ENCODE measurements at regions of chr11 and their contacts with region 1.

Region 1: GRCh38 chr11:86244522-86245368 is at the start of gene EED:
- DNase-seq: peak; percentile 90
- ATAC-seq: peak; percentile 87
- H3K4me3 Mint-ChIP-seq: no peak within 1 kb of the TSS
- H3K27ac Mint-ChIP-seq: no peak within 1 kb of the TSS
- H3K4me1 Mint-ChIP-seq: peaks cover 31% of the 10 kb centered on the region
- H3K27me3 Mint-ChIP-seq: no peaks in the 10 kb centered on the region
- CTCF ChIP-seq: no peak
- total RNA-seq, gene EED: 55.2 and 63.7 TPM in 2 replicates

Region 2: DNA sequence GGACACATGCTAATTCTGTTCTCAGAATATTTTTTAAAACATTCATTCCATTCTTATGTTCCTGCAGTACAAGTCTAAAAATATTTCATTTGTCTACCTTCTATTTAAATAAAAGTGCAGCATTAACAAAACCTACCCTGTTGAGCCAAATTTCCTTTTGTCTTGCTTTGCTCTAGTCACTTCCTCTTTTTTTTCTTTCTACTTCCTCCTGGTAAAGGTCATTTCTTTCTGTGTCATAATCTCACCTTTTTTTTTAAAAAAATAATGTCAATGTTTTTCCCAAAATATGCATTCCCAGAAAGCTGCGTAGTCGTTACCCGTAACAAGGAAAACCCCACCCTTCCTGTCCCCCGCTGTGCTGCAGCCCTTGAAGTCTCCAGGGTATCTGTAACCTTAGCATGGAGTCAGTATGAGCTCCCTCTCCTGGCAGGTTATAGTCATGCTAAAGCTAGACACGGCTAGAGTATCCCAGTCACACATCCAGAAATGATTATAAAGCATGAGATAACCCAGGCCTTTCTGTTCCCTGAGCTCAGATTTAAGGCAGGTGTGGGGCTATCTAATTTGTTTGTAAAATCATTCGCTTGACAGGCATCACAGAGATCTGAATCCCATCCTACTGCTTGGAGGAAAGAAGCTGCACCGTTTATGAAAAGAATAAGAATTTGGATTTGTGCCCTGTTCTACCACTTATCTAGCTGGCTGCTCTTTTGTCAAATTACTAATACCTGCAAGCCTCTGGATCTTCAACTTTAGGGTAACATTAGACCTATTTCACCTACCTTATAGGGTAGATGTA is 51.2 kb before region 1 on chr11:
- CTCF ChIA-PET with region 1: interaction called, 8 read pairs
- POLR2A ChIA-PET with region 1: interaction called, 8 read pairs
- intact Hi-C with region 1: loop called (anchors 1 kb)
- DNase-seq: peak; percentile 48
- ATAC-seq: peak; percentile 96
- H3K4me3 Mint-ChIP-seq: peak overlapping the region; percentile 76
- H3K27ac Mint-ChIP-seq: peak overlapping the region; percentile 92
- H3K4me1 Mint-ChIP-seq: peaks cover 30% of the 10 kb centered on the region
- H3K27me3 Mint-ChIP-seq: no peaks in the 10 kb centered on the region
- CTCF ChIP-seq: peak; percentile 50

Region 3: GRCh38 chr11:86218125-86219084 is 26.3 kb before region 1 on chr11:
- CTCF ChIA-PET with region 1: interaction called, 6 read pairs
- POLR2A ChIA-PET with region 1: interaction called, 59 read pairs
- intact Hi-C with region 1: loop called (anchors 1 kb)
- DNase-seq: no peak
- ATAC-seq: peak; percentile 22
- H3K4me3 Mint-ChIP-seq: peak overlapping the region; percentile 69
- H3K27ac Mint-ChIP-seq: peak overlapping the region; percentile 94
- H3K4me1 Mint-ChIP-seq: peaks cover 48% of the 10 kb centered on the region
- H3K27me3 Mint-ChIP-seq: no peaks in the 10 kb centered on the region
- CTCF ChIP-seq: peak; percentile 32

Region 4: DNA sequence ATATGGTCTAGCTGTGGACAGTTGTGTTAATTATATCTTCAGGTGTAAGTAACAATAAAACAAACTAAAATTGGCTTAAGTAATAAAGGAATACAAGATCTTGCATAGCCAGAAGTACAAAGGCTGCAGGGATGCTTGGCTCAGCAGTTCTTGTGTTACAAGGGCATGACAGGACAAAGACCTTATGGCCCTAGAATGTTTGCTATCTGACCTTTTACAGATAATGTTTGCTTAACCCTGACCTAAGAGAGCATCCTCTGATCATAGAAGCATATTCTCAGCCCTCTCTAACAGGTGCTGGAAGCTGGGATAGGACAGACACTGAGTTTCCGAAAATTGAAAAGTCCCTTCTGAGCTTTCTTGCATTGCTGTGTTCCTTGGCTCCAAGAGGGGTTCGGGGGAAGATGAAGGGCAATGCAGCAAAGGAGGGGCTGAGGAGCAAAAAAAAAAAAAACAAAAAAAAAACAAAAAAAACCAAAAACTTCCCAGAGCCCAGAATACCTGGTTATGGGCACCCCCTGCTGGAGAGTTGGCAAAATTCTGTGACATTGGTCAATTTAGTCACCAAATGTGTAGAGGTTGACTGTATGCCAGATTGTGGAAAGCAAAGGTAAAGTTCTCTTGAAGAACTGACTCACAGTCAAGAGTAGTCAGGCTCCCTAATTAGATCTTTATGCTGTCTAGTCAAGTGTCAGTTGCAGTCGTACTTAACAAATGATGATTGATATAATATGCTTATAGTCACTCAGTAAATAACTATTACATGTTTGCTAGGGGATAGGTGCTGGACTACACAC is 46.9 kb after region 1 on chr11:
- CTCF ChIA-PET with region 1: interaction called, 4 read pairs
- POLR2A ChIA-PET with region 1: interaction called, 11 read pairs
- intact Hi-C with region 1: loop called (anchors 1 kb)
- DNase-seq: no peak
- ATAC-seq: peak; percentile 44
- H3K4me3 Mint-ChIP-seq: no peak overlapping the region
- H3K27ac Mint-ChIP-seq: no peak overlapping the region
- H3K4me1 Mint-ChIP-seq: peaks cover 35% of the 10 kb centered on the region
- H3K27me3 Mint-ChIP-seq: no peaks in the 10 kb centered on the region
- CTCF ChIP-seq: peak; percentile 34

Region 5: GRCh38 chr11:86497181-86497701 is 252.5 kb after region 1 on chr11:
- CTCF ChIA-PET with region 1: no interaction called
- POLR2A ChIA-PET with region 1: no interaction called
- intact Hi-C with region 1: no loop called
- DNase-seq: no peak
- ATAC-seq: no peak
- H3K4me3 Mint-ChIP-seq: no peak overlapping the region
- H3K27ac Mint-ChIP-seq: no peak overlapping the region
- H3K4me1 Mint-ChIP-seq: no peaks in the 10 kb centered on the region
- H3K27me3 Mint-ChIP-seq: peaks cover 3% of the 10 kb centered on the region
- CTCF ChIP-seq: no peak